Activated naive CD8-positive, alpha-beta T cell treated with anti-CD3 and anti-CD28 coated beads, Interleukin-2, amount 10 ng/mL, durations not matched to agents 7 days and 5 days (primary cell): ENCODE measurements at regions of chr6 and their contacts with region 1.

Region 1: DNA sequence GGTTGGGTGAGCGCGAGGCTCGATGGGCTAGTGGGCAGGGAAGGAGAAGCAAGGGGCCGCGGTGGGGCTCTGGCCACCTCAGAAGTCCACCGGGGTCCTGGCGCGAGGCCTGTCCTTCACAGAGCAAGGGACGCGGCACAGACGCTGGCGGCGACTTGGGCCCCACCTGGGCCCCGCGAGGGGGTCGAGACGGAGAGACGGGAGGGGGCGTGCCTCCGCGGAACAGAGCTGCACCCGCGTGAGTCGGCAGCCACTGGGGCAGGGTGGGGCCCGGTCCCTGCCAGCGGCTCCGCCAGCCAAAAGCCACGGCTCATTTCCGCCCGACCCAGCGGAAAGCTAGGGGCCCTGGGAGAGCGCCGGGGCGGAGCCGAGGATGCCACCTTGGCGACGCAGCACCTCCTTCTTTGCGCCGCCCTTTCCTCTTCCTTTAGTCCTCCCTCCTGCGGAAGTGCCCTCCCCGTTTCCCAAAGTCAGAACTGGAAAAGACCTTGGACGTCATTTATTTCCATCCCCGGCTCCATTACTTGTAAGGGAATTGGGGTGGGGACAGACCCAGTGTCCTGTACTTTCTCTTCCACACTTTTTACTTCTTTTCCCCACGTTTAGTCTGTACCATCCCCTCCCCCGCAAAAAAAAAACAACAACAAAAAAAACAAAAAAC is at the start of gene CUL7:
- DNase-seq: peak; percentile 93
- ATAC-seq: peak; percentile 99
- H3K4me3 Mint-ChIP-seq: peak within 1 kb of the TSS; percentile 99
- H3K27ac Mint-ChIP-seq: peak within 1 kb of the TSS; percentile 99
- H3K4me1 Mint-ChIP-seq: peaks cover 40% of the 10 kb centered on the region
- H3K27me3 Mint-ChIP-seq: no peaks in the 10 kb centered on the region
- total RNA-seq, gene CUL7: 10.2 to 12.7 TPM

Region 2: GRCh38 chr6:43013843-43014433 is 39.7 kb before region 1 on chr6 and contains the starts of genes KLHDC3 and MEA1:
- POLR2A ChIA-PET with region 1: interaction called, 17 read pairs
- DNase-seq: peak; percentile 94
- ATAC-seq: peak; percentile 95
- H3K4me3 Mint-ChIP-seq: peak within 1 kb of the TSS; percentile 93
- H3K27ac Mint-ChIP-seq: peak within 1 kb of the TSS; percentile 92
- H3K4me1 Mint-ChIP-seq: peaks cover 41% of the 10 kb centered on the region
- H3K27me3 Mint-ChIP-seq: no peaks in the 10 kb centered on the region
- total RNA-seq, gene KLHDC3: 69.4 to 69.9 TPM
- total RNA-seq, gene MEA1: 61.2 to 70.1 TPM

Region 3: DNA sequence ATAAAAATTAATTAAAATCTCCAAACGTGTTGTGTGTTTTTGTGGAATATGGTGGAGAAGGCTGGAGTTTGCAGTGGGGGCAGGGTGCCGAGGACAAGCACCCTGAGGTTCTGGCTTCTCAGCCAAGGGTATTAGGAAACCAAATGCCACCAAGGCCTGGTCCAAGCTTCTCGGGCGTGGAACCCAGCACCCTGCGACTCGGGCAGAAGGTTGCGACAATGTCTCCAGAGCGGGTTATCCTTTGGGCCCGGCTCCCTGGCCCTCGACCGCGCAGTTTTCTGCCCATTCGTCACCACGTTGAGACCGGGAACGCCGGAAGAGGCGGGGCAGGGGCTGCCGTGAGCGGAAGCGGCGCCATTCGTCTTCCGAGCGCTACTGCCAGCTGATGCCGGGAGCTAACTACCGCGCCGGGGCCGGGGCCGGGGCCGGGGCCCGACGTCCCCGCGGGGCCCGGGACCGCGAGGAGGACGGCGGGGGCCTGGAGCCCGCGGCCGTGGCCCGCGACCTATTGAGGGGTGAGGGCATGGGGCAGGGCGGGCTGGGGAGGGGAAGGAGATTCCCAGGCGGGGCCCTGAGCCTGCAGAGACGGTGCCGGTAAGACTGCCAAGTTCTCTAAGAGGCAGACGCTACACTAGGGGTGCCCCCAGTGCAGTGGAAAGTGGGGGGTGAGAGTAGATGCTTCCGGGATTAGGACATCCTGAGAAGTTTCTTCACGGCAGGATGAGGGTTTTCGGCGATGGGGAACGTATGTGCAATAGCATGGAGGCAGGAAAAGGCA is 32.2 kb before region 1 on chr6 and contains the start of gene RRP36:
- POLR2A ChIA-PET with region 1: interaction called, 14 read pairs
- DNase-seq: peak; percentile 72
- ATAC-seq: peak; percentile 75
- H3K4me3 Mint-ChIP-seq: peak within 1 kb of the TSS; percentile 98
- H3K27ac Mint-ChIP-seq: peak within 1 kb of the TSS; percentile 93
- H3K4me1 Mint-ChIP-seq: peaks cover 19% of the 10 kb centered on the region
- H3K27me3 Mint-ChIP-seq: no peaks in the 10 kb centered on the region
- total RNA-seq, gene RRP36: 63.8 to 65.6 TPM

Region 4: DNA sequence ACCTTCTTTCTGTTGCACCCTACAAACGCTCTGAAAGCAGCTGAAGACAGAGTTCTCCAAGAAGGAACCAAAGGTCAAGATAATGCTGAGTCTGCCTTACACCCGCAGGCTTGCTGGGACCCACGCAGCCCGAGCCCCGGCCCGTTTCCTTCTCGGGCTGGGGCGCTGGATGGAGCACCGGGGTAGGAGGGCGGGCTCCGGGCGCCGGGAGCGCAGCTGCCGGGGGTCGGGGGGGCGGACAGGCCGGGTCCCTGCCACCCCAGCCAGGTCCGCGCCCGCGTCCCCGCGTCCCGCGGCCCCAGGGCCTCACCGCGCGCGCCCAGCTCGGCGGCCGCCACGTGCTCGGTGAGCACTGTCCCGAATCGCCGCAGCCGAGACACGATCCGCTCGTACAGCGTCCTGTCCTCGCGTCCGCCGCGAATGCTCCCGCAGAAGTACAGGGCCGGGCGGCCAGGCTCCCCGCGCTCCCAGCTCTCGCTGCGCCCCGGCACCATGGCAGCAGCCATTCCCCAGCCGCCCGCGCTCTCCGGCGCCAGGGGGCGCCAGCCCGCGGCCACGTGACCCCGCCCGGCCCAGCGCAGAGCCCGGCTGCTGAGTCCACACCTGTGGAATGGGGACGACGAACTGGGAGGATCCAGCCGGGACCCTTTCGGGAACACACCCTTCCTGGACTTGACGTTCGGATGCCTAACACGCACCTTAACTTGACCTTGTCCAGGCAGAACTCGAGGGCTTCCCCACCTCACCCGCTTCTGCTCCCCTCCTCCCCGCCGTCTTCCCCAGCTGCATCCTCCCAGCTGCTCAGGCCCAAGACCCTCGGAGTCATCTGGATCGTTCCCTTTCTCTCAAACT is 175.5 kb after region 1 on chr6 and contains the start of gene DNPH1:
- POLR2A ChIA-PET with region 1: no interaction called
- DNase-seq: peak; percentile 93
- ATAC-seq: peak; percentile 81
- H3K4me3 Mint-ChIP-seq: peak within 1 kb of the TSS; percentile 86
- H3K27ac Mint-ChIP-seq: peak within 1 kb of the TSS; percentile 84
- H3K4me1 Mint-ChIP-seq: peaks cover 34% of the 10 kb centered on the region
- H3K27me3 Mint-ChIP-seq: peaks cover 13% of the 10 kb centered on the region
- total RNA-seq, gene DNPH1: 42.2 to 43.7 TPM